ENCODE measurements at regions of chr12 and their contacts with region 1.

Region 1: GRCh38 chr12:90940872-90941499 is 14.0 kb downstream of the CCER1 start:
- DNase-seq: peak; percentile 23
- ATAC-seq: no peak
- H3K4me3 ChIP-seq: no peak overlapping the region
- H3K4me3 Mint-ChIP-seq: no peak overlapping the region
- H3K27ac ChIP-seq: no peak overlapping the region
- H3K27ac Mint-ChIP-seq: no peak overlapping the region
- H3K4me1 ChIP-seq: no peaks in the 10 kb centered on the region
- H3K4me1 Mint-ChIP-seq: no peaks in the 10 kb centered on the region
- H3K27me3 ChIP-seq: peaks cover 0 to 6% (median 0%) of the 10 kb centered on the region in 4 experiments
- H3K27me3 Mint-ChIP-seq: peaks cover 22% of the 10 kb centered on the region
- CTCF ChIP-seq: peak; percentile 66

Region 2: DNA sequence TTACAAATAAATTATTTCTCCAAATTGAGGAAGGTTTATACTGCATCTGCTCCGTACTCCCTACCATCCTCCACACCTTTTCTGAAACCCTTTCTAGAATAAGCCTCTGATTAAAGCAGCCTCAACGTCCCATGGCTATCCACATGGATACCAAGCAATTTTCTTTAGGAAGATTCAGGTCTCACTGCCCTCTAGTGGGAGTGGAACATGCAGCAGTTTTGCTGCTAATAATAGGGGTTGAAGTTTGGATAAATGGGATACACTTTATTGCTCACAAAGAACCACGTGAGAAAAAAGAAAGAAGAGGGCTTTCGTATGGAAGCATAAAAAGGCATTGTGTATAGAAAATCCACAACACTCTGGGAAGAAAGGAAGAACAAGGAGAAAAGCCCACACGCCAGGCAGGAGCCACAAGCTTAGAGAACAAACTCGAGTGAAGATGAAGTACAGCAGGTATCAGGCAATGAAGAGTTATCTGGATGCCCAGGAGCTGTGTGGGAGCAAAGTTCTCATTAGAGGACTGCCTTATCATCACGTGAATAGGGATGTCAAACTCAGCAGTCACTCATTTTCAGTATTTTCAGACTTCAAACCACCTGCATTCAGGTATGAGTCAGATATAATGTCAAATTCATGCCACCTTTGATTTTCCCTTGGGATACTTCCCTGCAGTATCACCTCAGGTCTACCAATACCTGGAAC is 31.8 kb before region 1 on chr12:
- CTCF ChIA-PET with region 1: no interaction called
- POLR2A ChIA-PET with region 1: no interaction called
- intact Hi-C with region 1: no loop called
- DNase-seq: no peak
- ATAC-seq: no peak
- H3K4me3 ChIP-seq: no peak overlapping the region
- H3K4me3 Mint-ChIP-seq: no peak overlapping the region
- H3K27ac ChIP-seq: no peak overlapping the region
- H3K27ac Mint-ChIP-seq: no peak overlapping the region
- H3K4me1 ChIP-seq: no peaks in the 10 kb centered on the region
- H3K4me1 Mint-ChIP-seq: no peaks in the 10 kb centered on the region
- H3K27me3 ChIP-seq: no peaks in the 10 kb centered on the region
- H3K27me3 Mint-ChIP-seq: peaks cover 8% of the 10 kb centered on the region
- CTCF ChIP-seq: peak; percentile 29

Region 3: DNA sequence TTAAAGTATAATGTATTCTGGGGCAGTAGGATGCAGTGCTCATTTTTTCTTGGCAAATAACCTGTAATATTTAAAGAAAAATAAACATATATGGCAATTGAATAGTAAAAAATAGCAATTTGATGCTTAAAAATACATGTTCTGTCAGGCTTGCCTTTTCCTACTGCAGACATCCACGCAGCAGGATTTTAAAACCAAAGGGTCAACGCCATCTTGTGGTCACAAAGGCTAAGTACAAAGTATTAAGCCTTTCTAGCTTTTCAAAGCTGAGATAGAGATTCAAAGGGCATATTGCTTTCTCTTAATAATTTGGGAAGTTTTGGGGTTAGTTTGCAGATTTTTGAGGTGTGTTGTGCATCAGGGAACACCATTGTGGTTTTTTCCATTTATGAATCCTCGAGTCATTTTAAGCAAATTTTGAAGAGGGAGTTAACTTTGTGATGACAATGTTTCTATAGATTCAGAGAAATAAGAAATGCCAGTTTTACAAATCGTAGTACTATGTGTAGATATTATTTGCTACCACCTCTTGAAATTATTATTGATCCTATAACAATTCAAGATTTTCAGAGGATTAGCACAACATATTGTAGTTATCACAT is 18.7 kb after region 1 on chr12:
- CTCF ChIA-PET with region 1: interaction called, 22 read pairs
- POLR2A ChIA-PET with region 1: no interaction called
- intact Hi-C with region 1: no loop called
- DNase-seq: peak; percentile 40
- ATAC-seq: peak; percentile 58
- H3K4me3 ChIP-seq: no peak overlapping the region
- H3K4me3 Mint-ChIP-seq: no peak overlapping the region
- H3K27ac ChIP-seq: no peak overlapping the region
- H3K27ac Mint-ChIP-seq: no peak overlapping the region
- H3K4me1 ChIP-seq: no peaks in the 10 kb centered on the region
- H3K4me1 Mint-ChIP-seq: no peaks in the 10 kb centered on the region
- H3K27me3 ChIP-seq: no peaks in the 10 kb centered on the region
- H3K27me3 Mint-ChIP-seq: no peaks in the 10 kb centered on the region
- CTCF ChIP-seq: peak; percentile 82

Measured in B cell (primary cell).